ENCODE measurements at regions of chr1 and their contacts with region 1.

Region 1: DNA sequence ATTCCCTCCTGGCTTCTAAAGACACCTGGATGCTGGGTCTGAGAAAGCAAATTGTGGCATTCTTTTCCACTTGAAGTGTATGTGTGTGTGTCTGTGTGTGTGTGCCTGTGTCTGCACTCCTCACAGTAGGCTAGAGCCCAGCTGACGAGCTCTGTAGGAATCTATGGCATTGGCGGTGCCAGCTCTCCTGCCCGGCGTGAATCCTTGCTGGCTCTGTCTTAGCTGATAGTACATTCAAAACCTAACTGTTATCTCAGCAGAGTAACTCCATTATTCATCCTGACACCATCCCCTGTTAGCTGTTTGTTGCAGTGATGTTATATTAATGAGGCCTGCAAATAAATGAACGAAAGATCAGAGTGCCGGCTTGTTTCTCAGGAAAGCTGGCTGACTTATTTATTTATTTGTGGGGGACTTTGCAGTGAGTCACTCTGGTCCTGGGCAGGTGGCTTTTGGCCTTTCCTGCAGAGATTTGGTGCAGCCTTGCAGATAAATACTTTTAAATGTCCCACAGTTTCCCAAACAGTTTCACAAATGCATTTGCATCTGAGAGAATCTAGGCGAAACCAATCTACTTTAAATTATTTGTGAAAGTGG is 160.6 kb upstream of the CD34 start:
- DNase-seq: no peak
- H3K4me3 ChIP-seq: no peak overlapping the region
- H3K27ac ChIP-seq: no peak overlapping the region
- H3K4me1 ChIP-seq: peaks cover 0 to 15% of the 10 kb centered on the region in 2 experiments; a peak in 2 of 4 replicates
- H3K27me3 ChIP-seq: no peaks in the 10 kb centered on the region
- CTCF ChIP-seq: no peak
- EP300 ChIP-seq: no peak
- RAD21 ChIP-seq: no peak

Region 2: DNA sequence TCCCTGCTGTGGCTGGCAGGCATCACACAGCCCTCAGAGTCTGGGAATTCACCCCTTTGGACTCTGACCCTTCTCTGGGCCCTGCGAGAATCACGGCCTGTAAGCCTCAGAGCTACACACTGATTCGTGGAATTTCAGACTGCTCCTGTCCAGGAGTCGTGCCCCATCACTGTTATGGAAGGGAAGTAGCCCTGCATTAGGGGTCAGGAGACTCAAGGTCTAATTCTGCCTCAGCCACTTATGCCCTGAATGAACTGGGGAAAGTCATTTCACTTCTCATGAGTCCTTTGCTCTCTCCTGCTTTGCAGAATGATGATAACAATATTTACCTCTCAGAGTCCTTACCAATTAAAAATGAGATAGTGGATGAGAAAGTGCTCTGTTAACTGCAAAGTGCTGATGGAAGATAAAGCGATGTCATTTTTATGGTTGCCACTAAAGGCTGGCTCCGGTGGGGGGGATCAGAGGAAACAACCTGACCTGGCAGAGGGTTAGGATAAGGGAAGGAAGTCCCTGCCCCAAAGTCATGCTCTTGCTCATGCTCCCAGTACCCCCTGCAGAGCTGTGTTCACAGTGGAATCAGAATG is 12.0 kb before region 1 on chr1:
- CTCF ChIA-PET with region 1: interaction called, 19 read pairs
- POLR2A ChIA-PET with region 1: interaction called, 3 read pairs
- DNase-seq: peak; percentile 83
- H3K4me3 ChIP-seq: no peak overlapping the region
- H3K27ac ChIP-seq: peak overlapping the region; percentile 28 to 98; a peak in 3 of 4 replicates
- H3K4me1 ChIP-seq: peaks cover 20 to 50% of the 10 kb centered on the region in 2 experiments
- H3K27me3 ChIP-seq: no peaks in the 10 kb centered on the region
- CTCF ChIP-seq: no peak
- EP300 ChIP-seq: peak in 1 of 2 experiments; percentile 98; a peak in 2 of 4 replicates
- RAD21 ChIP-seq: no peak; the same call in none of the 2 replicates

Region 3: GRCh38 chr1:208081972-208082371 is 10.4 kb after region 1 on chr1:
- CTCF ChIA-PET with region 1: interaction called, 24 read pairs
- POLR2A ChIA-PET with region 1: interaction called, 3 read pairs
- DNase-seq: no peak
- H3K4me3 ChIP-seq: no peak overlapping the region
- H3K27ac ChIP-seq: no peak overlapping the region
- H3K4me1 ChIP-seq: peaks cover 7 to 57% of the 10 kb centered on the region in 2 experiments; a peak in 3 of 4 replicates
- H3K27me3 ChIP-seq: no peaks in the 10 kb centered on the region
- CTCF ChIP-seq: no peak
- EP300 ChIP-seq: no peak
- RAD21 ChIP-seq: no peak